ENCODE measurements at regions of chr14 and their contacts with region 1.

Region 1: DNA sequence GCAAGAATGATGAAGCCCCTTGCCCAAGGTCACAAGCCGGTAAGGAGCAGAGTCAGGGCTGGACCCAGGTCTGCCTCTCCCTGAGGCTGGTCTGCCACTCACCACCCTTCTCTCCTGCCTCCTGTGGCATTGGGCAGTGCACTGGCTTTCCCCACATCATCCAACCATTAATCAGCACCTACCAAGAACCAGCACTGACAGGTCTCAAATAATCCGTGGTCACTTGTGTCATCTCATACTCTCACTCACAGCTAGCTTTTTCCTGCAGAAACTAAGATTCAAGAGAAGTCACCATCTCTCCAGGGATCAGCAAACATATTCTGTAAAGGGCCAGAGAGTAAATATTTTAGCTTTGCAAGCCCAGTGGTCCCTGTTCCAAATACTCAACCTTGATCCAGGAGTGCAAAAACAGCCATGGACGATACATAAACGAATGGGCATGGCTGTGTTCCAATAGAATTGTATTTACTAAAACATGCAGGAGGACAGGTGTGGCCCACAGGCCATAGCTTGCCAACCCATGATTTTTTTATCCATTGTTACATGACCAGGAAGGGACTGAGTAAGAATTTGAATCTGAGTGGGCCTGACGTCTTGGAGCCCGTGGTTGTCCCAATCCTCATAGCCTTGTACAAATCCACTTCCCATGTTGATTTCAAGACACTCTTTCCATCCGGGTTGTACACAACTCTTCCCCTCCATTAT is 374.2 kb downstream of the BCL11B start:
- DNase-seq: no peak
- ATAC-seq: no peak
- H3K4me3 ChIP-seq: no peak overlapping the region
- H3K4me1 ChIP-seq: no peaks in the 10 kb centered on the region
- CTCF ChIP-seq: no peak

Region 2: DNA sequence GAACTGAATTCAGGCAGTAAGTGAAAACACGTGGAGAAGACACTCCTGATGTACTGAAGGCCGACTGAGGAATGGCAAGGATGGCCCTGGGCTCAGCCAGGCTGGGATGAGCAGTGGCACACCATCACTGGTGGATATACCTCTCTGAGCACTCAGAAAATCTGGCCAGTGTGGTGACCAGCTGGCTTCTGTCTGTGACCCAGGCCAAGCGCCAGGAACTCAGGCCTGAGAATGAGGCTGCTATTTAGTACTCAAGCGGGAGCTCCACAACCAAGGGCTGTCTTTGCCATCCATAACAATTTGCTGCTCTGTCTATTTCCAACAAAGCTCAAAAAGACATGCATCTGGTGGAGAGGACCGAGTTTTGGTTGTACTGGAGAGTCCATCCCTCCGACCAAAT is 212.0 kb before region 1 on chr14:
- intact Hi-C with region 1: no loop called
- DNase-seq: no peak
- ATAC-seq: no peak
- H3K4me3 ChIP-seq: no peak overlapping the region
- H3K4me1 ChIP-seq: no peaks in the 10 kb centered on the region
- CTCF ChIP-seq: no peak

Region 3: DNA sequence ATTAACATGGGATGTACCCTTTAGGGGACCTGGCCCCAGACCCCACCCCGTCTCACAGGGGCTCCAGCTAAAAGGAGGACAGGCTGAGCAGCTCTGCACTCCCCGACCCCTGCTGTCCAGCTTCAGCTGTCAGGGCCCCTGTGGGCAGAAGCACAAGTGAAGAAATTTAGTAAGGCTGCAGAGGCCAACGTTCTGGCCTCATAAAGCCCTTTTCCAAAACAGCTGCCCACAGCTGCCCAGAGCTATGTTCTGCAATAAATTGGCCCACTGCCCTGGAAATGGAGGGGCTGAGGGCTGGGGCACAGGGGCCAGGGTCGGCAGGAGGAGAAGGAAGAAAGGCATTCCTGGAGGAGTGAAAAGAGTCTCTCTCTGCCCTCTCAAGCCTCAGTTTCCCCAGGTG is 17.2 kb after region 1 on chr14:
- intact Hi-C with region 1: loop called in 1 of 2 experiments (anchors 2 kb)
- DNase-seq: no peak
- ATAC-seq: no peak
- H3K4me3 ChIP-seq: no peak overlapping the region
- H3K4me1 ChIP-seq: peaks cover 12% of the 10 kb centered on the region
- CTCF ChIP-seq: no peak

Measured in mucosa of descending colon (tissue), 3 donors.